Right cardiac atrium (tissue), 5 donors: ENCODE measurements at regions of chr17 and their contacts with region 1.

Region 1: GRCh38 chr17:5592382-5592781 is 8.1 kb upstream of the NLRP1 start:
- DNase-seq: no peak
- ATAC-seq: no peak
- H3K4me3 ChIP-seq: no peak overlapping the region
- H3K27ac ChIP-seq: no peak overlapping the region
- H3K4me1 ChIP-seq: no peaks in the 10 kb centered on the region
- H3K27me3 ChIP-seq: peaks cover 2% of the 10 kb centered on the region

Region 2: DNA sequence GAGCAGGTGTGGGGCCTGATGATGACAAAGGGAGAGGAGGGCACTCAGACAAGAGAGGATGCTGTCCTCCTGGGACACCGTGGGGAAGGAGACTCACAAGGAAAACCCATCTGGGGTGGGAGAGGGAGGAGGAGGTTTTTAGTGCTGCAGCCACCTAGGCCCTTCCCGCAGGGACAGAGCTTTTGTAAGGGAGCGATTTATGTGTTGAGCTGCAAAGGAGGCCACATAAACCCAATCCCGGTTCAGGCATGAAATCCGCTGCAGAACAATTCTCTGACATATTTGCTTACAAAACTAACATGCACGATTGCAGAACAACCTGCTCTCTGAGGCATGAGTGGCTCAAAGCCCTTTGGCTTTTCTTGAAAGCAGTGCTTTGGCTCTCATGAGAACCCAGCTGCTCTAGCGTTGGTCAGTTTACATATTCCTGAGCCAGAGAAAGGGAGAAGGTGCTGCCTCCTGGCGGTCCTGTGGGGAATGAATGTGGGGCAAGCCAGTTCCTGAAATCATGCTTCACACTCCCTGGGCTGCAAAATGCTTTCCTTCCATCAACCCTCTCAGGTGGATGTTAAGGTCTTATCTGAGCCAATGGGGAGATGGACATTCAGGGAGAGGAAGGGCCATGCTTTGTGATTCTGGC is 114.3 kb after region 1 on chr17:
- intact Hi-C with region 1: loop called in 3 of 4 experiments (anchors 5 to 10 kb)
- DNase-seq: peak; percentile 42 to 77 (median 72)
- ATAC-seq: peak in 1 of 2 donors; percentile 52
- H3K4me3 ChIP-seq: no peak overlapping the region
- H3K27ac ChIP-seq: no peak overlapping the region
- H3K4me1 ChIP-seq: no peaks in the 10 kb centered on the region
- H3K27me3 ChIP-seq: no peaks in the 10 kb centered on the region

Region 3: GRCh38 chr17:6054375-6054774 is 462.0 kb after region 1 on chr17:
- intact Hi-C with region 1: loop called in 3 of 4 experiments (anchors 5 to 10 kb)
- DNase-seq: no peak
- ATAC-seq: no peak
- H3K4me3 ChIP-seq: no peak overlapping the region
- H3K27ac ChIP-seq: no peak overlapping the region
- H3K4me1 ChIP-seq: no peaks in the 10 kb centered on the region
- H3K27me3 ChIP-seq: no peaks in the 10 kb centered on the region